GM13976 (cell line): ENCODE measurements at regions of chr1 and their contacts with region 1.

Region 1: DNA sequence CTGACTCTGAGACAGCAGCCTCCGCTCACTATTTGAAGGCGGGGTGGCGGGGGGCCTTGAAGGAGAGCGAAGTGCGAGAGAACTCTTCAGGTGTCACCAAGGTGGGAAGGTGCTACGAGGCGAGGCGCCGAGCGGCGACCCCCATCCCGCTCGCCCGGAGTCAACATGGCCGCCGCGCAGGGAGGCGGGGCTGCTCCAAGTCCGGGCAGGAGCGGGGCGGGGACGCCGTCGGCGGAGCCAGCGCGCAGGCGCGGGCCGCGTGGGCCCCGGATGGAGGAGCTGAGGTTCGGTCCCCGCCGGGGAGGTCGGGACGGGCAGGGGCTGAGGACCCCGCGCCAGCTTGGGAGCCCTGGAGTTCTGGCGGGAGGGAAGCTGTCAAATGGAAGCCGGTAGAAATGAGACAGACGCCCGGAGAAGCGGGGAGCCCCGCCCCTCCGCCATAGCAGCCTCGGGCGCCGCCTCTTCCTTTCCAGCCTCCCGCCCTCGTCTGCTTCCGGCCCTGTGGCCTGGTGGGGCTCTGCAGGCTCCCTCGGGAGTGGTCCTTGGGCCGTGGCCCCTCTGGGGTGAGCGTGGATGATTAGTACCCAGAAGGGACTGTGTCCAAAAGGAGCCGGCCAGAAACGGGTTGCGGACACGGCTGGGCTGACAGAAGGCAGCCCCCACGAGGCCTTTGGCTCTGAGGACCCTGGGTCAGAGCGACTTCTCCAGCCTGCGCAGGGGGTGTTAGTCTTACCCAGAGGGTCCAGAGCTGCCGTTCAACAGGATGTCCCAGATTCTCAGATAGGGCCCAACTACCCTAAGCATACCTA is at the start of gene PIGV:
- DNase-seq: peak; percentile 93
- CTCF ChIP-seq: no peak

Region 2: GRCh38 chr1:26608895-26609294 is 179.0 kb before region 1 on chr1:
- in situ Hi-C with region 1: loop called (anchors 5 kb)
- DNase-seq: no peak
- CTCF ChIP-seq: no peak